H1 (cell line): ENCODE measurements at regions of chr12 and their contacts with region 1.

Region 1: GRCh38 chr12:53213348-53213747 is 6.3 kb upstream of the ITGB7 start:
- DNase-seq: peak in 1 of 2 experiments; percentile 96
- H3K4me3 ChIP-seq: no peak overlapping the region
- H3K27ac ChIP-seq: no peak overlapping the region
- H3K4me1 ChIP-seq: peaks cover 21 to 45% (median 35%) of the 10 kb centered on the region in 4 experiments
- H3K27me3 ChIP-seq: no peaks in the 10 kb centered on the region
- CTCF ChIP-seq: peak in 2 of 3 experiments; percentile 96 to 97; a peak in 3 of 4 replicates
- EP300 ChIP-seq: no peak
- POLR2A ChIP-seq: no peak
- RAD21 ChIP-seq: peak; percentile 98

Region 2: DNA sequence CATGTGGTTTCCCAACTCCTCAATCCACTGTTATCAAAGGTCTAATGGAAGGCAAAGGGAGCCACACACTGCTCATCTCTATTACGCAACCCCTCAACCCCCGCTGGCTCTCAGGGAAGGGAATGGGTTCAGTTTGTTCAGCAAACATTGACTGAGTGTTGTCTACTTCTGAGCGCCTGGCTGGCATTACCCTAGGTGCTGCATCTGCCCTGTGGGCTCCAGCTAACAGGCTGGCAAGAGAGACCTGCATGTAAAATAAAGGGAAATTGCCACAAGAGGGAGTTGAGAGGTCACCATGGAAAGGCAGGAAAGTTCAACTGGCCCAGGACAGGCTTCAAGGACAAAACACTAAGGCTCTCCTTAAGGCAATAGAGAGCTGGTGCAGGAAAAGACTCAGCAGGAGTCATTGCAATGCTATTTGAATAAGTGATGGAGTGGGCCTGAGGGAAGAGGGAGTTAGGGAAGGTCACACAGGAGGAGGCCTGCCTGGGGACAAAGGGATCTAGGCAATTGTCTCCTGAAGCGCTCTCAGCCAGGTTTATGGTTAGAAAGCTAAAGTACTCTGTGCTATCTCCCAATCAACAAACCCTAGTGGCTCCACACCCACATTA is 38.4 kb before region 1 on chr12:
- CTCF ChIA-PET with region 1: interaction called, 36 read pairs
- POLR2A ChIA-PET with region 1: interaction called, 5 read pairs
- DNase-seq: no peak
- H3K4me3 ChIP-seq: no peak overlapping the region
- H3K27ac ChIP-seq: no peak overlapping the region
- H3K4me1 ChIP-seq: peaks cover 1 to 9% (median 5%) of the 10 kb centered on the region in 4 experiments; a peak in 4 of 7 replicates
- H3K27me3 ChIP-seq: peaks cover 14 to 74% (median 57%) of the 10 kb centered on the region in 4 experiments
- CTCF ChIP-seq: peak in 2 of 3 experiments; percentile 64 to 66; a peak in 3 of 4 replicates
- EP300 ChIP-seq: no peak
- POLR2A ChIP-seq: no peak
- RAD21 ChIP-seq: peak; percentile 56 to 62

Region 3: DNA sequence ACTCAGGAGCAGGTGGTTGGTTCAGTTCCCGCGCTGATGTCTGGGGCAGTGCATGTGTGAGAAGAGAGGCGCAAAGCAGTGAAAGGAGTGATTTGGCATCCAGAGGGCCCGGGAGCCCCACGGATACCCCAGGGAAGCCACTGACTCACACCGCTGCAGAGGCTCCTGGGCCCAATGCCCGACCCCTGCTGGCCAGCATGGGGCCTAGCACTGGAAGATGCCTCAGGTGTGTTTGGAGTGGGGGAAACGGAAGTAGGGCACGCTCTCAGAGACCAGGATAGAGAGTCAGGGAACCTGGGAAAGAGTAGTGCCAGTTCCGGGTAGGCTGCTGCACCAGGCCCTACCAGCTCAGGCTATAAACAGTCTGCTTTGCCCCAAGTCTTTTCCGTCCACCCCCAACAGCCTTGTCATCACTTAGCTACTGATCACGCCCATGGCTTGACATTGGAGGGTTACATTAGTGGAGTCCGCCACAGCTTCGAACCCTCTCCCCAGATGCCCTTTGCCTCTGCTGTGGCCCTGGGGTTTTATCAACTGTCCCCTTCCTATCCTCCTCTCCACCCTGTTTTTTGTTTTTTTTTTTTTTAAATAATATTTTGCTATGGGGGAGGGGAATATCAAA is 23.1 kb before region 1 on chr12:
- CTCF ChIA-PET with region 1: interaction called, 198 read pairs
- POLR2A ChIA-PET with region 1: interaction called, 5 read pairs
- DNase-seq: peak in 1 of 2 experiments; percentile 81
- H3K4me3 ChIP-seq: no peak overlapping the region
- H3K27ac ChIP-seq: no peak overlapping the region
- H3K4me1 ChIP-seq: peaks cover 0 to 6% (median 3%) of the 10 kb centered on the region in 4 experiments; a peak in 4 of 7 replicates
- H3K27me3 ChIP-seq: peaks cover 0 to 8% (median 3%) of the 10 kb centered on the region in 4 experiments; a peak in 4 of 7 replicates
- CTCF ChIP-seq: peak; percentile 86 to 97 (median 89)
- EP300 ChIP-seq: no peak
- POLR2A ChIP-seq: no peak
- RAD21 ChIP-seq: peak; percentile 63 to 75

Region 4: DNA sequence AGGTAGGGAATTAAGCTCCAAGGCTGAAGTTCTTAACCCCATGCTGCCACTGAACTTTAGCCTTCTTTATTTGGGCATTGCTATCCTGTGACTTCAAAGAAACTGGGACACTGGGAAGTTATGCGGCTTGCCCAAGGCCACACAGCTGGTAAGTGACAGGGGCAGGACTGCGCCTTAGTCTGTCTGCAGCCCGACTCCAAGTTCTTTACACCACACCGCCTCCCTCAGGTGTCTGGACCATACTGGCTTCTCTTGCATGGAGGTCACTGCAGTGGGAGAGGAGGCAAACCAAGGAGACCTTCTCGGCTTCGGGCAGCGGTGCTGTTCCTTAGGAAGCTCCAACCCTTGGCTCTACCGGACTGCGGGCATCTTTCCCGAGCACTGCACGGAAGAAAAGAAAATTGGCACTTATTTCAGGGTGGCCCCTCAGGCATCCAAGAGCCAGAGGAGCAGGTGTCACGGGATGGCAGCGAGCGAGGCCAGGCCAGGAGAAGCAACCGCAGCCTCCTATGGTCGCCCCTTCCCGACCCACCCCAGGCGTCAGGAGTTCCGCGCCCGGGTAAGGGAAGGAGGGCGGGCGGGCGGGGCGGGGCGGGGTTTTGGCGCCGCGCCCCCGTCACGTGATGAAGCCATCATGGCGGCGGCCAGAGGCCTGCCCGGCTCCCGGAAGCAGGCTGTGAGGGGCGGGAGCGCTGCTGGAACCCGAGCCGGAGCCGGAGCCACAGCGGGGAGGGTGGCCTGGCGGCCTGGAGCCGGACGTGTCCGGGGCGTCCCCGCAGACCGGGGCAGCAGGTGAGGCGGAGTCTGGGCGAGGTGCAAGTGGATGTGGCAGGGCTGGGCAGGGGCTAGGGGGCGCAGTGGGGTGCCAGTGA is 38.4 kb after region 1 on chr12:
- CTCF ChIA-PET with region 1: interaction called, 654 read pairs
- POLR2A ChIA-PET with region 1: interaction called, 41 read pairs
- DNase-seq: peak in 1 of 2 experiments; percentile 86
- H3K4me3 ChIP-seq: peak overlapping the region; percentile 71 to 94 (median 80)
- H3K27ac ChIP-seq: peak overlapping the region; percentile 54; the same call in 1 of the 2 replicates
- H3K4me1 ChIP-seq: peaks cover 0 to 12% (median 3%) of the 10 kb centered on the region in 4 experiments; a peak in 5 of 7 replicates
- H3K27me3 ChIP-seq: no peaks in the 10 kb centered on the region
- CTCF ChIP-seq: peak; percentile 56 to 69 (median 65)
- EP300 ChIP-seq: no peak
- POLR2A ChIP-seq: peak in 1 of 2 experiments; percentile 54; a peak in 1 of 3 replicates
- RAD21 ChIP-seq: peak; percentile 78 to 84